ENCODE measurements at regions of chr6 and their contacts with region 1.

Region 1: GRCh38 chr6:100171533-100172321 is 177.7 kb upstream of the MCHR2 start:
- DNase-seq: peak; percentile 28
- H3K4me3 Mint-ChIP-seq: no peak overlapping the region
- H3K27ac Mint-ChIP-seq: peak overlapping the region; percentile 55
- H3K4me1 Mint-ChIP-seq: peaks cover 60% of the 10 kb centered on the region
- H3K27me3 Mint-ChIP-seq: no peaks in the 10 kb centered on the region

Region 2: DNA sequence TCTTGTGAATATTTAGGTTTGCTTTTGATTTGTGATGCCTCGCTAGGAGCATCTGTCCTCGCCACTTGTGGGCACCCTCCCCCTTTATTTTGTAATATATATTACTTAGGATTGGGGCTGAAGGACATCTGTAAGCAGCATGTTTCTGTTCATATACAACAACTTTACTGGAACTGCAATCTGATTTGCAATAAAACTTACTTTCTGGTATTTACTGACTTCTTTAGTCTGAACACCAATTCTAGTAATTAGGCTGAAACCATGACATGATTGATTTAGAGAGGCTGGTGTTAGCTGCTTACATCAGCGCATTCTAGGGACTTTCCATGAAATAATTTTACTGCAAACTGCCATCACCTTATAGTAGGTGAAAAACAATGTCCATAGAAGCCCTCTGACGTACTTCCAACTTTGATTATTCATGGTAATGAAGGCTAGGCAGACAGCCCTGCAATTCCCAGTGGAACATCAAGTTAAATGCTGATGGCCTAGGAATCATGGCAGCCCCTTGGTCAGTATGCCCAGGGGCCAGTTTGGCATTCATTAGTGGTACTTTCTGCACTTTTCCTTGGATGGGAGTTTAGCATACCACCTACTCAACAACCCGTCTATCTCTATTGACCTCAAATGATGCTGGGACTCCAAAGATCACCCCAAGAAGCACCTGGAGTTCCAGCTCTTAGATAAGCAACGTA is 44.8 kb before region 1 on chr6:
- intact Hi-C with region 1: loop called (anchors 1 kb)
- DNase-seq: no peak
- H3K4me3 Mint-ChIP-seq: no peak overlapping the region
- H3K27ac Mint-ChIP-seq: peak overlapping the region; percentile 77
- H3K4me1 Mint-ChIP-seq: peaks cover 19% of the 10 kb centered on the region
- H3K27me3 Mint-ChIP-seq: no peaks in the 10 kb centered on the region

Region 3: GRCh38 chr6:100472674-100473073 is 300.9 kb after region 1 on chr6:
- intact Hi-C with region 1: loop called (anchors 1 kb)
- DNase-seq: peak; percentile 36
- H3K4me3 Mint-ChIP-seq: no peak overlapping the region
- H3K27ac Mint-ChIP-seq: peak overlapping the region; percentile 29
- H3K4me1 Mint-ChIP-seq: peaks cover 34% of the 10 kb centered on the region
- H3K27me3 Mint-ChIP-seq: peaks cover 52% of the 10 kb centered on the region

Region 4: GRCh38 chr6:101114703-101115102 is 943.0 kb after region 1 on chr6:
- intact Hi-C with region 1: no loop called
- DNase-seq: no peak
- H3K4me3 Mint-ChIP-seq: no peak overlapping the region
- H3K27ac Mint-ChIP-seq: no peak overlapping the region
- H3K4me1 Mint-ChIP-seq: no peaks in the 10 kb centered on the region
- H3K27me3 Mint-ChIP-seq: no peaks in the 10 kb centered on the region